Heart left ventricle (tissue), 16 donors: ENCODE measurements at regions of chr4 and their contacts with region 1.

Region 1: DNA sequence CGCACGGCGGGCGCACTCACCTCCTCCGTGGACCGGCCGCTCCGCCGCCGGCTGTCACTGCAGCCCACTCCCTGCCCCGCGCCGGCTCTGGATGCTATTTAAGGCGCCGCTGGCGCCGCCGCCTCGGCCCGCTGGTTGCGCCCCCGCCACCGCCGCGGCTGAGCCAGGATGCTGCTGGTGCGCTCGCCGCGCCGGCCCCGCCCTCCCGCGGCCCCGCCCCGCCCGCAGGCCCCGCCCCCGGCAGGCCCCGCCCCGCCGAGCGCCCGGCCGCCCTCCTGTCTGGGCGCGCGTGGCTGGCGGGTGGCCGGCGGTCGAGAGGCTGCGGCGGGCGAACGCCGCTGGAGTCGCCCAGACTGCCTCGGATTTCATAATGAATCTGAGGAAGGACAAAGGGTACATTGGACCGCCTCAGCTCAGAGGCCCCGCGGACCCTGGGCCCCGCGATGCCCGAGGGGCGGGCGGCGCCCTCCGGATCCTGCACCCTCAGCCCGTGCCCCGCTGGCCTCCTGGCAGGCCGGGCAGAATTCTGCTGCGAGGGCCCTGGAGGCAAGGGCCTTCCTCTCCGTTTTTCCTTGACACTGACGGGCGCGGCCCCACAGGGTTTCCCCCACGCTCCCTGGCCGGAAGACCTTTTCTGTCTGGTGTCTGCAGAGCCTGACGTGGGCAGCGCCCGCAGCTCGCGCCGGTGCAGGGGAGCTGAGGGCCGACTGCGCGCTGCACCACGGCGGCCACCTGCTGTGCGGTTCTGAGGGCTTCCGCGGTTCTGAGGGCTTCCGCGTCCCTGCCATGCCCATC is at the start of gene ACSL1:
- DNase-seq: peak; percentile 85 to 94 (median 92)
- ATAC-seq: peak; percentile 64 to 94 (median 88)
- H3K4me3 ChIP-seq: peak within 1 kb of the TSS; percentile 50 to 91 (median 70)
- H3K27ac ChIP-seq: peak within 1 kb of the TSS; percentile 33 to 94 (median 84)
- H3K4me1 ChIP-seq: peaks cover 2 to 50% (median 27%) of the 10 kb centered on the region in 12 donors
- H3K27me3 ChIP-seq: no peaks in the 10 kb centered on the region
- CTCF ChIP-seq: peak in 1 of 12 donors; percentile 9
- POLR2A ChIP-seq: peak; percentile 97
- total RNA-seq, gene ACSL1: 171 to 603 (median 266) TPM

Region 2: DNA sequence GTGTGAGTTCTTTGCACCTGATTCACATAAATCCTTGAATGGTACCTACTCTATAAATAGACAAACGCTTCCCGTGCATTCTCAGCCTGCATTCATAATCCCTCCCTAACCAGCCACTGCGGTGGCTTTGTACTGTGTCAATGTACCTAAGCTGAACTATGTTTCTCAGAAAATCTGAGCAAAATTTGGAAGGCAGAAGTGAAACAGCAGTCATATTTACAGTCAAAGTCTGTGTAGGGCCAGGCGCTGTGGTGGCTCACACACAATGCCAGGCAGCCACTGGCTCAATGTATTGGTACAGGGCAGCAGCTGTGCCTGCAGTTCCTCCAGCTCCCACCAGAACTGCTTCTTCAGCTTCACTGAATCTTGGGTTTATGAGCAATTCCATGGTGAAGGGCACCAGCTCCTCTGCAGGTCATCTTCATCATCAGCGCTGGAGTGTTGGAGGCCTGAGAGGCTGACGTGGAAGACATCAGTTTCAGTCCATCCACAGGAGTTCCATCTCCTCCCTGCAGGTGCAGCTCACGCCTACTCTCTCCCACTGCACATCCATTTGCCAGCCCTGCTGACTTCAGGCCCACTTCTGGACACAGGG is 319.5 kb before region 1 on chr4:
- intact Hi-C with region 1: no loop called
- DNase-seq: no peak
- ATAC-seq: peak in 3 of 4 donors; percentile 31 to 58 (median 39)
- H3K4me3 ChIP-seq: no peak overlapping the region
- H3K27ac ChIP-seq: peak overlapping the region in 1 of 12 donors; percentile 18
- H3K4me1 ChIP-seq: peaks cover 0 to 46% (median 0%) of the 10 kb centered on the region in 12 donors
- H3K27me3 ChIP-seq: no peaks in the 10 kb centered on the region
- CTCF ChIP-seq: peak in 2 of 12 donors; percentile 11 to 12
- POLR2A ChIP-seq: no peak

Region 3: GRCh38 chr4:184733654-184734524 is 92.2 kb before region 1 on chr4 and contains the start of gene CENPU:
- intact Hi-C with region 1: loop called in 1 of 10 experiments (anchors 5 kb)
- DNase-seq: peak; percentile 96 to 98 (median 97)
- ATAC-seq: peak; percentile 99 to 100 (median 100)
- H3K4me3 ChIP-seq: peak within 1 kb of the TSS; percentile 45 to 94 (median 71)
- H3K27ac ChIP-seq: peak within 1 kb of the TSS in 11 of 12 donors; percentile 45 to 82 (median 62)
- H3K4me1 ChIP-seq: peaks cover 0 to 20% (median 11%) of the 10 kb centered on the region in 12 donors
- H3K27me3 ChIP-seq: no peaks in the 10 kb centered on the region
- CTCF ChIP-seq: peak in 1 of 12 donors; percentile 3
- POLR2A ChIP-seq: peak in 1 of 2 donors; percentile 73
- total RNA-seq, gene CENPU: 0.36 to 7.1 (median 1.3) TPM

Region 4: DNA sequence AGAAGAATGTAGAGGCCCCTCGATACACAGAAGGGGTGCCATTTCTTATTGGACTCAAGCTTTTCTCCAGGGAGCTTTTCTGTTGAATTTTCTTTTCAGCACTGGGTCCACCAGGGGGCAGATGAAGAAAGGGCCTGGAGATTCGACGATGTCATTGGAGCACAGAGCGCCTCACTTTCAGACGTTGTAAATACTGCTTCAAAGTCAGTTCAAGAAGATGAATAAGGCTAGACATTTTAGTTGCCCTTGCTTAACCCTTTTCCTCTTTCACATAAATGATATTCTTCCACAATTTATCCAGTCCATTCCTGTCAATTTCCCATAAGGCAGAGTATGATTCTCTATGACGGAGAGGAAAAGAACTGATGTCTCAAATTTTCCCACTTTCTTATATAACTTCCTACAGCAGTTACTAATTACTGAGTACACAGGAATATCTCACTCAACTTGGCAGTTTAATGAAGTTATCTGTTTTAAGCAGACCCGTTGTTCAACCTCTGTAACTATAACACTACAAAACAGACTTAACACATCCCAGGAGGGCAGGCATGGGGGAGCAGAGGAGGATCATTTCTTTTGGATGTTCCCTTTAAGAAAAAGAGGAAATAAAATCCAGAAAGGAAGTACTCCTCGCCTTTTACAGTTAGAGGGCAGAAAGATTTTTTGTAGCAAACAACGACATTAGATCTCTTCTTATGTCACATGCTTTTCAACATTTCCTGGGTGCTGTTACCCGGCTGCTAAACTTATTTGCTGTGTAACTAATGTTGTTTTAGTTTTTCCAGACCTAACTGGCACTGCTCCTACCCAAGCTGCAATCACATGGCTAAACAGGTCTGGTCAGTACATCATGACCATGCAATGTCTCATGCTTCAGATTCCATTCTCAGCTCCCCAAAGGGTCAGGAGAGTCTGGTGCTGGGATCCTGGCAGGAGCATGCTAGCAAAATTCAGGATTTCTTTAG is 80.0 kb before region 1 on chr4:
- intact Hi-C with region 1: loop called in 6 of 10 experiments (anchors 5 kb)
- DNase-seq: peak in 4 of 5 donors; percentile 69 to 78 (median 77)
- ATAC-seq: peak; percentile 71 to 88 (median 82)
- H3K4me3 ChIP-seq: peak overlapping the region in 5 of 12 donors; percentile 0 to 29 (median 9)
- H3K27ac ChIP-seq: peak overlapping the region; percentile 73 to 94 (median 81)
- H3K4me1 ChIP-seq: peaks cover 0 to 60% (median 37%) of the 10 kb centered on the region in 12 donors
- H3K27me3 ChIP-seq: no peaks in the 10 kb centered on the region
- CTCF ChIP-seq: peak; percentile 63 to 85 (median 78)
- POLR2A ChIP-seq: no peak

Region 5: DNA sequence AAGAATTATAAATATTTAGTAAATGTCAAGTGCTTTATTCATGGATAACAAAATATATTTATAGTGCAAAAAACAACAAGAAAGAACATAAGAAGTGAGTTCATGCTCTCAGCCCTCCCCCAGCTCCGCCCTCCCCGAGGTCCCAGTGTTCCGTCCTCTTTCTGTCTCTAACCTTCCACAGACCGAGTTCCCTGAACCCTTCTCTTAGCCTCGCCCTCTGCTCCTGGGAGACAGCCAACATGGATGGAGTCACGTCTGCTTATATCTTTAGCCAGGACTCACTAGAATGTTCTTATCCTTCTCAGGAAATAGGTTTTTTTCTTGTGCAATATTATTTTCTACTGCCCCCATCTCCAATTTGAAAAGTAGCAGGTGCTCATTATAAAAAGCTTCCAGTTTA is 152.1 kb after region 1 on chr4:
- intact Hi-C with region 1: loop called in 3 of 10 experiments (anchors 5 to 10 kb)
- DNase-seq: peak in 4 of 5 donors; percentile 56 to 86 (median 73)
- ATAC-seq: peak; percentile 70 to 90 (median 86)
- H3K4me3 ChIP-seq: no peak overlapping the region
- H3K27ac ChIP-seq: peak overlapping the region in 3 of 12 donors; percentile 3 to 73 (median 15)
- H3K4me1 ChIP-seq: peaks cover 0 to 24% (median 10%) of the 10 kb centered on the region in 12 donors
- H3K27me3 ChIP-seq: no peaks in the 10 kb centered on the region
- CTCF ChIP-seq: no peak
- POLR2A ChIP-seq: no peak

Region 6: GRCh38 chr4:184983672-184984356 is 157.7 kb after region 1 on chr4:
- intact Hi-C with region 1: loop called in 3 of 10 experiments (anchors 5 to 10 kb)
- DNase-seq: peak; percentile 52 to 81 (median 64)
- ATAC-seq: peak; percentile 70 to 82 (median 78)
- H3K4me3 ChIP-seq: no peak overlapping the region
- H3K27ac ChIP-seq: no peak overlapping the region
- H3K4me1 ChIP-seq: peaks cover 0 to 20% (median 11%) of the 10 kb centered on the region in 12 donors
- H3K27me3 ChIP-seq: no peaks in the 10 kb centered on the region
- CTCF ChIP-seq: peak in 10 of 12 donors; percentile 27 to 65 (median 50)
- POLR2A ChIP-seq: no peak

Region 7: GRCh38 chr4:185142912-185143595 is 317.0 kb after region 1 on chr4 and contains the start of gene SLC25A4:
- intact Hi-C with region 1: loop called in 2 of 10 experiments (anchors 10 kb)
- DNase-seq: peak; percentile 89 to 95 (median 94)
- ATAC-seq: peak; percentile 86 to 90 (median 88)
- H3K4me3 ChIP-seq: peak within 1 kb of the TSS; percentile 43 to 89 (median 74)
- H3K27ac ChIP-seq: peak within 1 kb of the TSS; percentile 77 to 97 (median 88)
- H3K4me1 ChIP-seq: peaks cover 0 to 68% (median 25%) of the 10 kb centered on the region in 12 donors
- H3K27me3 ChIP-seq: peaks cover 0 to 15% (median 0%) of the 10 kb centered on the region in 9 donors
- CTCF ChIP-seq: peak; percentile 23 to 69 (median 51)
- POLR2A ChIP-seq: peak; percentile 83 to 99
- total RNA-seq, gene SLC25A4: 878 to 2,214 (median 1,547) TPM